Activated T-helper 1 cell treated with anti-CD3 and anti-CD28 coated beads, Interleukin-12 subunit alpha, Interleukin-12 subunit beta, Interleukin-2, Interleukin-4 antibody, amounts not matched to agents 30 ng/mL and 10 ng/mL and 1 ng/mL, durations not matched to agents 14 hours and 24 hours and 36 hours (primary cell): ENCODE measurements at regions of chr16 and their contacts with region 1.

Region 1: DNA sequence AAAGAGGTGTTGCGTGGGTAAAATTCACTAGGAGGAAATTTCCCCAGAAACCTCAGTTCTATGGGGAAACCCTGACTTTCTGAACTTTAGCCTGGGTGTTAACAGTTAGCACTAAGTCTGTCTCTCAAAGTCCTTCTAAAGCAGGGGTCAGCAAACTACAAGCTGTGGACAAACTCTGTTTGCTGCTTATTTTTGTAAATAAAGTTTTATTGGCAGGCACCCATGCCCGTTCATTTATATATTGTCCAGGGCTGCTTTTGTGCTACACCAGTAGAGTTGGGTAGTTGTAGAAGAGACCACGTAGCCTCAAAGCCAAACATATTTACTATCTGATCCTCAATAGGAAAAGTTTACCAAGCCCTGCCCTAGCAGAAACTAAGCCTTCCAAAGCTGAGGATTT is 159.7 kb downstream of the USP31 start:
- DNase-seq: no peak
- H3K4me3 Mint-ChIP-seq: no peak overlapping the region
- H3K27ac Mint-ChIP-seq: no peak overlapping the region
- H3K4me1 Mint-ChIP-seq: no peaks in the 10 kb centered on the region
- H3K27me3 Mint-ChIP-seq: no peaks in the 10 kb centered on the region

Region 2: DNA sequence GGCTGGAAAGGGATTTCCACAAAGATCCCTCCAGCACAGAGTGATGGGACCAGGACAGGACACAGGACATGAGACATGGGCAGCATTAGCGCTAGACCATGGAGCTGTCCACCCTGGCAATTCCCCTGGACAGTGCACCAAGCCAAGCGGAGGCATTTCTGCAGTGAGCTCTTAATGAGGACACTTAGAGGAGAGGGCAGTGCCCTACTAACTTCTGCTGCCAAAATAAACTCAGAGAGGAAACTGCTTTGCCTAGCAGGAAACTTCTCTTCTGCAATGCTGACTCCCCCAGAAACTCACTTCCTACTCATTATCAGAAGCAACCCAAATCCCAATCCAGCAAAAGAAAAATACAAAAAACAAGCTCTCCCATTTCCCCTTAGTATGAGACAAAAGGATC is 56.4 kb before region 1 on chr16:
- intact Hi-C with region 1: loop called (anchors 10 kb)
- DNase-seq: no peak
- H3K4me3 Mint-ChIP-seq: no peak overlapping the region
- H3K27ac Mint-ChIP-seq: no peak overlapping the region
- H3K4me1 Mint-ChIP-seq: no peaks in the 10 kb centered on the region
- H3K27me3 Mint-ChIP-seq: peaks cover 15% of the 10 kb centered on the region

Region 3: DNA sequence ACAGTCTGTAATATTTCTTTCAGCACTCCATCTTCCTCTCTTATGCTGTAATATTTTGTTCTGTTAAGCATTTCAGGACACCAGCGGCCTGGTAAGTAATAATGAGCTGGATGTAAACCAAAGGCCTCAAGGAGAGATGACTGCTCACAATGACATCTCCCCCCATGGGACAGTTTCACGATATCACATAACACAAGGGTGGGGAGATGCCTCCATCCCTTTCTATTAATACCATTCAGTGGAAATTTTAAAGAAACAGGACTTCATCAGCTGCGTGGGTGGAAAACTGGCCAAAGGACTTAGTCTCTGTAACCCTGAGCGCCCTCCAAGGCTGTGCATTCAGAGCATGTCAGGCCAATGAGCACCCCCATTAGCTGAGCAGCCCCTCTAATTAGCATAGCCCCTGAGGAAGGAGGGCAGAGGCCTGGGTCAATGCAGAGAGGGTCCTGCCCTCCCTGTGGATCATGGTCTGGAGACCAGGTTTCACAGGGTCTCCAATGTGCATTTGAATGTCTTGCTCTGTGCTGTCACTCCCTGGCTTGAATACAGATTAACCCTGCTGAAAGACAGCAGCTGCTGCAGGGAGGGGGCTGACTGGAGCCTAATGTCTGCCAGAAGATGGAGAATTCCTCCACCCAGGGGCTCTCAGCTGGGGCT is 19.3 kb before region 1 on chr16:
- intact Hi-C with region 1: no loop called
- DNase-seq: no peak
- H3K4me3 Mint-ChIP-seq: no peak overlapping the region
- H3K27ac Mint-ChIP-seq: no peak overlapping the region
- H3K4me1 Mint-ChIP-seq: no peaks in the 10 kb centered on the region
- H3K27me3 Mint-ChIP-seq: no peaks in the 10 kb centered on the region

Region 4: DNA sequence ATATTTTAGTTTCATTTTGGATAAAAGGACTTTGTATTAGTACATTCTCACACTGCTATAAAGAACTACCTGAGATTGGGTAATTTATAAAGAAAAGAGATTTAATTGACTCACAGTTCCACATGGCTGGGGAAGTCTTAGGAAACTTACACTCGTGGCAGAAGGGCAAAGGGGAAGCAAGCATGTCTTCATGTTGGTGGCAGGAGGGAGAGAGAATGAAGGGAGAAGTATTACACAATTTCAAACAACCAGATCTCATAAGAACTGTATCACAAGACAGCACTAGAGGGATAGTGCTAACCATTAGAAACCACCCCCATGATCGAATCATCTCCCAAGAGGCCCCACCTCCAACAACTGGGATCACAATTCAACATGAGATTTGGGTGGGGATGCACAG is 16.8 kb after region 1 on chr16:
- intact Hi-C with region 1: no loop called
- DNase-seq: no peak
- H3K4me3 Mint-ChIP-seq: no peak overlapping the region
- H3K27ac Mint-ChIP-seq: no peak overlapping the region
- H3K4me1 Mint-ChIP-seq: no peaks in the 10 kb centered on the region
- H3K27me3 Mint-ChIP-seq: peaks cover 3% of the 10 kb centered on the region